AG04449 (cell line): ENCODE measurements at regions of chr1 and their contacts with region 1.

Region 1: GRCh38 chr1:210584439-210585113 is 255.9 kb downstream of the HHAT start:
- DNase-seq: no peak
- H3K4me3 ChIP-seq: no peak overlapping the region
- CTCF ChIP-seq: peak; percentile 82

Region 2: DNA sequence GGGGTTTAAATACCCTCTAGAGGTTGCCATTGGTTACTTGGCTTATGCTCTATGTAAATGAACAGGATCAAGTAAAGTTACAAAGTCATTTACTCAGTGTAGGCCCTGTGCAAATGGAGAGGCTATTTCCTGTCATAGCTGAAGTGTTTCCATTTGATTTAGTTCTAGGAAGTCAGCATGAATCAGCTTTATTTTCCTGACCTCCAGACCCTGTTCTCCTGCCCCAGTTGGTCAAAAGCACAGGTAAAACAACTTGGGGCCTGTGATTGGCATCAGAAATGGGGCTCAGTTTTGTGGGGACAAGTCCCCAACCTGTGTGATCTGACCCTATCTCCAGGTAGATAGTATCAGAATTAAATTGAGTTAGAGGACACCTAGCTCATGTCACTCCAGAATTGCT is 15.9 kb before region 1 on chr1:
- CTCF ChIA-PET with region 1: interaction called, 12 read pairs
- POLR2A ChIA-PET with region 1: interaction called, 3 read pairs
- DNase-seq: no peak
- H3K4me3 ChIP-seq: no peak overlapping the region
- CTCF ChIP-seq: no peak

Region 3: DNA sequence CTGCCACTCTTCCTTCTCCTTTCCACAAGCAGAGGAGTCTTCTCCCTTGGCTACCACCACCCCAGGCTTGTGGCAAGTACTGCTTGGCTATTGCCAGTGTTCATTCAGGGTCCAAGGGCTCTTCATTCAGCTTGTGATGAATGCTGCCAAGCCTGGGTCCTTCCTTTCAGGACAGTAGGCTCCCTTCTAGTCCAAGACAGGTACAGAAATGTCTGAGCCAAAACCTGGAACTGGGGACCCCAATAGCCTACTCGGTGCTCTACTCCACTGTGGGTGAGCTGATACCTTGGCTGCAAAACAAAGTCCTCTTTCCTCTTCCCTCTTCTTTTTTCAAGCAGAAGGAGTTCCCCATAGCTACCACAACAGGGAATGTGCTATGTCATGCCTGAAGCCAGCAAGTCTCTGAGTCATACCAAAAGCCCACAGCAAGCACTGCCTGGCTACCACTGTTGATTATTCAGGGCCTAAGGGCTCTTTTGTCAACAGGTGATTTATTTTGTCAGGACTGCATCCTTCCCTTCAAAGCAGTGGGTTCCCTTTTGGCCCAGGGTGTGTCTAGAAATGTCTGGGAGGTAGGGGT is 13.1 kb after region 1 on chr1:
- CTCF ChIA-PET with region 1: interaction called, 25 read pairs
- POLR2A ChIA-PET with region 1: interaction called, 6 read pairs
- DNase-seq: peak; percentile 86
- H3K4me3 ChIP-seq: no peak overlapping the region
- CTCF ChIP-seq: no peak

Region 4: GRCh38 chr1:210777914-210778313 is 193.3 kb after region 1 on chr1:
- CTCF ChIA-PET with region 1: no interaction called
- POLR2A ChIA-PET with region 1: no interaction called
- DNase-seq: no peak
- H3K4me3 ChIP-seq: no peak overlapping the region
- CTCF ChIP-seq: no peak

Region 5: GRCh38 chr1:211127166-211127565 is 542.6 kb after region 1 on chr1:
- CTCF ChIA-PET with region 1: interaction called, 363 read pairs
- POLR2A ChIA-PET with region 1: no interaction called
- DNase-seq: no peak
- H3K4me3 ChIP-seq: no peak overlapping the region
- CTCF ChIP-seq: no peak